ENCODE measurements at regions of chr2 and their contacts with region 1.

Region 1: DNA sequence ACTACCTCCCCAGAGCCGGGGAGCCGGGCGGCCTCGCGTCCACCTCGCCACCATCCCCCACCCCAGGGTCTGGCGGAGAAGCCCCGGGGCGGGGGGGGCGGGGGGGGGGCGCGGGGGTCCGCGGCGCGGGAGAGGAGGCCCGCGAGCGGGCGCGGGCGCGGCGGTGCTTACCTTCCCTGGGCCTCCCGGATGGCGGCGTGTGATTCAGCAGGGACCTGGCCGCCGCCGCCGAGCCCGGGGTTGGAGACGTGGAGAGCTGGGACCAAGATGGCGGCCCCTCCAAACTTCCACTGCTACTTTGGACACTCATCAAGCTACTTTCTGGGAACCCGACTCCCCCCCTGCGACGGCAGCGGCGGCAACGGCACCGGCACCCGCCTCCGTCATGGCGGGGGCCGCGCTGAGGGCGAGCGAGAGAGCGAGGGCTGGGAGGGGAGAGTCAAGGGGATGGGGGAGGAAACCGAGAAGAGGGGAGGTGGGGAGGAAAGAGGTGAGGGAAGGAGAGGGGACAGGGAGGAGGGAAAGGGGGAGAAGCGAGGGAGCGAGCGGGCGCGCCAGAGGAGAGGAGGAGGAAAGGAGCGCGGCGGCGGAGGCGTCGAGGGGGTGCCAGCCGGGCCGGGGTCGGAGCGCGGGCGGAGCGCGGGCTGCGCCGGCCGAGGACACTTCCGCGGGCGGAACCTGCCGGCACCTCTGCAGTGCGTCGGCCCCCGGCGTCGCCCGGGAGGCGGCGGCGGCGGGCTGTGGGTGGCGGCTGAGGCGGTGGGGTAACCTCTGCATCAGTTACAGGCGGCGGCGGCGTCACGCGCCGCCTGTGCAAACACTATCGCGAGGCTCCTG is at the start of gene TLK1:
- DNase-seq: peak; percentile 91
- ATAC-seq: peak; percentile 72
- H3K4me3 ChIP-seq: peak within 1 kb of the TSS; percentile 80 to 91 (median 84)
- H3K4me3 Mint-ChIP-seq: peak within 1 kb of the TSS; percentile 98
- H3K27ac ChIP-seq: peak within 1 kb of the TSS; percentile 81 to 95
- H3K27ac Mint-ChIP-seq: peak within 1 kb of the TSS; percentile 95
- H3K4me1 ChIP-seq: peaks cover 35 to 44% of the 10 kb centered on the region in 2 donors
- H3K4me1 Mint-ChIP-seq: peaks cover 52% of the 10 kb centered on the region
- H3K27me3 ChIP-seq: no peaks in the 10 kb centered on the region
- H3K27me3 Mint-ChIP-seq: no peaks in the 10 kb centered on the region
- CTCF ChIP-seq: no peak
- total RNA-seq, gene TLK1: 178 and 186 TPM in 2 replicates

Region 2: GRCh38 chr2:170815746-170816503 is 344.4 kb before region 1 on chr2:
- CTCF ChIA-PET with region 1: no interaction called
- POLR2A ChIA-PET with region 1: interaction called, 11 read pairs
- intact Hi-C with region 1: no loop called
- DNase-seq: peak; percentile 76
- ATAC-seq: peak; percentile 40
- H3K4me3 ChIP-seq: peak overlapping the region; percentile 21 to 49 (median 45)
- H3K4me3 Mint-ChIP-seq: peak overlapping the region; percentile 63
- H3K27ac ChIP-seq: no peak overlapping the region
- H3K27ac Mint-ChIP-seq: no peak overlapping the region
- H3K4me1 ChIP-seq: peaks cover 53 to 66% of the 10 kb centered on the region in 2 donors
- H3K4me1 Mint-ChIP-seq: peaks cover 50% of the 10 kb centered on the region
- H3K27me3 ChIP-seq: peaks cover 0 to 81% (median 65%) of the 10 kb centered on the region in 4 experiments
- H3K27me3 Mint-ChIP-seq: peaks cover 73% of the 10 kb centered on the region
- CTCF ChIP-seq: peak; percentile 67

Region 3: GRCh38 chr2:170973492-170974303 is 186.6 kb before region 1 on chr2:
- CTCF ChIA-PET with region 1: interaction called, 14 read pairs
- POLR2A ChIA-PET with region 1: interaction called, 6 read pairs
- intact Hi-C with region 1: loop called (anchors 1 kb)
- DNase-seq: peak; percentile 92
- ATAC-seq: peak; percentile 97
- H3K4me3 ChIP-seq: peak overlapping the region; percentile 43 to 86 (median 80)
- H3K4me3 Mint-ChIP-seq: peak overlapping the region; percentile 92
- H3K27ac ChIP-seq: peak overlapping the region; percentile 42 to 61
- H3K27ac Mint-ChIP-seq: peak overlapping the region; percentile 78
- H3K4me1 ChIP-seq: peaks cover 11 to 12% of the 10 kb centered on the region in 2 donors
- H3K4me1 Mint-ChIP-seq: peaks cover 12% of the 10 kb centered on the region
- H3K27me3 ChIP-seq: no peaks in the 10 kb centered on the region
- H3K27me3 Mint-ChIP-seq: no peaks in the 10 kb centered on the region
- CTCF ChIP-seq: peak; percentile 94

Region 4: DNA sequence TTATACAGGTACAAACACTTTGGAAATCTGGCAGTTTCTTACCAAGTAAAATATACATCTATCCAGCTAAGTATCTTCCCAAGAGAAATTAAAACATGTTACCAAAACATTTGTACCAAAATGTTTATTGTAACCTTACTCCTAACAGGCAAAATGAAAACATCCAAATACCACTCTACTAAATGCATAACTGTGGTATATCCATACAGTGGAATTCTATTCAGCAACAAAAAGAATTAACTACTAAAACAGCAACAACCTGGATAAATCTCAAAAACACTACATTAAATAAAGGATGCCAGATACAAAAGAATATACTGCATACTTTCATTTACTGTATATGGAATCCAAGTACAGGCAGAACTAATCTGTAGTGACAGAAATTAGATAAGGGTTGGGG is 50.8 kb before region 1 on chr2:
- CTCF ChIA-PET with region 1: interaction called, 5 read pairs
- POLR2A ChIA-PET with region 1: no interaction called
- intact Hi-C with region 1: loop called (anchors 5 kb)
- DNase-seq: no peak
- ATAC-seq: no peak
- H3K4me3 ChIP-seq: no peak overlapping the region
- H3K4me3 Mint-ChIP-seq: no peak overlapping the region
- H3K27ac ChIP-seq: peak overlapping the region in 1 of 2 donors; percentile 35
- H3K27ac Mint-ChIP-seq: peak overlapping the region; percentile 32
- H3K4me1 ChIP-seq: peaks cover 0 to 3% of the 10 kb centered on the region in 2 donors
- H3K4me1 Mint-ChIP-seq: peaks cover 54% of the 10 kb centered on the region
- H3K27me3 ChIP-seq: no peaks in the 10 kb centered on the region
- H3K27me3 Mint-ChIP-seq: no peaks in the 10 kb centered on the region
- CTCF ChIP-seq: no peak

Region 5: GRCh38 chr2:171325886-171326585 is 165.7 kb after region 1 on chr2:
- CTCF ChIA-PET with region 1: interaction called, 3 read pairs
- POLR2A ChIA-PET with region 1: interaction called, 6 read pairs
- intact Hi-C with region 1: loop called (anchors 2 kb)
- DNase-seq: peak; percentile 75
- ATAC-seq: peak; percentile 52
- H3K4me3 ChIP-seq: peak overlapping the region; percentile 24 to 54 (median 50)
- H3K4me3 Mint-ChIP-seq: peak overlapping the region; percentile 89
- H3K27ac ChIP-seq: peak overlapping the region; percentile 89 to 91
- H3K27ac Mint-ChIP-seq: peak overlapping the region; percentile 91
- H3K4me1 ChIP-seq: peaks cover 67 to 70% of the 10 kb centered on the region in 2 donors
- H3K4me1 Mint-ChIP-seq: peaks cover 76% of the 10 kb centered on the region
- H3K27me3 ChIP-seq: no peaks in the 10 kb centered on the region
- H3K27me3 Mint-ChIP-seq: no peaks in the 10 kb centered on the region
- CTCF ChIP-seq: no peak

Region 6: GRCh38 chr2:171416009-171416926 is 255.9 kb after region 1 on chr2:
- CTCF ChIA-PET with region 1: interaction called, 78 read pairs
- POLR2A ChIA-PET with region 1: interaction called, 5 read pairs
- intact Hi-C with region 1: loop called (anchors 1 kb)
- DNase-seq: peak; percentile 89
- ATAC-seq: peak; percentile 97
- H3K4me3 ChIP-seq: no peak overlapping the region
- H3K4me3 Mint-ChIP-seq: peak overlapping the region; percentile 21
- H3K27ac ChIP-seq: peak overlapping the region; percentile 47 to 71
- H3K27ac Mint-ChIP-seq: peak overlapping the region; percentile 77
- H3K4me1 ChIP-seq: peaks cover 15% of the 10 kb centered on the region in 2 donors
- H3K4me1 Mint-ChIP-seq: peaks cover 16% of the 10 kb centered on the region
- H3K27me3 ChIP-seq: no peaks in the 10 kb centered on the region
- H3K27me3 Mint-ChIP-seq: no peaks in the 10 kb centered on the region
- CTCF ChIP-seq: peak; percentile 83

Region 7: DNA sequence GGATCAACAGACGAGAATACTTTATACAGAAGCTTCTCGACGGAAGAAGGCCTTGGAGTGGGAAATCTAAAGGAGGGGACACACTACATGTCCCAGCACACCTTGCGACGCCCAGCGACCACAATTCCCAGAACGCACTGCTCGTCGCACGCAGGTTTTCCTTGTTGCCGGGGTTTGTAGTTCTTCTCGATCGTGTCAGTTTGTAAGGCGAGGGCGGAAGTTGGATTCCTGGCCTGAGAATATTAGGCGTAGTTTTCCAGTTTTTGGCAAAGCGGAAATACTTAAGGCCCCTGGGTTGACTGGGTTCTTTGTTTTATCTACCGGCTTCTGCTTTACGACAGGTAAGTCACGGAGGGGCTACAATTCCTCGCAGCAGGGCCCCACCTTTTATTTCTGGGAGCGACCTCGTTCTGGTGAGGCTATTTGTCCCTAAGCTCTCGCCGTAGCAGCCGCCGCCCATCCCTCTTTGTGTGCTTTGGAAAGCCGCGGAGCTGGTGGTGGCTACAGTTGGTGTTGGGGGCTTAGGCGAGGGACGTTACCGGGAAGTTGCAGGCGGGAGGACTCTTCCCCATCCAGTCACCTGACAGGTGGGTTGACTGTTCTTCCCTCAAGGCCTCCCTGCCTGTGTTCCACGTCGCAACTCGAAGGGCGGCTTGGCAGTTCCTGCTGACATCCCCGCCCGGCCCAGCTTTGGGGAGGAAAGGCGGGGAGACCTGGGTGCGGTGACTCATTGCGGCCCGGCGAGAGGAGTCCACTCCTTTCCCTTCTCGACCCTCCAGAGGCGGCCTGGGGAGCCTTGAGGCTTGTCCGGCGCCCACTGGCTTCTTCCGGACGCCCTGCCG is 527.2 kb after region 1 on chr2 and contains the start of gene DYNC1I2:
- CTCF ChIA-PET with region 1: no interaction called
- POLR2A ChIA-PET with region 1: no interaction called
- intact Hi-C with region 1: loop called (anchors 5 kb)
- DNase-seq: peak; percentile 88
- ATAC-seq: peak; percentile 92
- H3K4me3 ChIP-seq: peak within 1 kb of the TSS; percentile 77 to 89 (median 88)
- H3K4me3 Mint-ChIP-seq: peak within 1 kb of the TSS; percentile 93
- H3K27ac ChIP-seq: peak within 1 kb of the TSS; percentile 58 to 83
- H3K27ac Mint-ChIP-seq: peak within 1 kb of the TSS; percentile 85
- H3K4me1 ChIP-seq: peaks cover 12 to 13% of the 10 kb centered on the region in 2 donors
- H3K4me1 Mint-ChIP-seq: peaks cover 18% of the 10 kb centered on the region
- H3K27me3 ChIP-seq: no peaks in the 10 kb centered on the region
- H3K27me3 Mint-ChIP-seq: peaks cover 9% of the 10 kb centered on the region
- CTCF ChIP-seq: no peak
- total RNA-seq, gene DYNC1I2: 53.9 and 57.6 TPM in 2 replicates

Measured in B cell (primary cell).